Upper lobe of right lung (tissue), 1 donor: ENCODE measurements at regions of chr17 and their contacts with region 1.

Region 1: GRCh38 chr17:43994272-43995149 is 9.9 kb upstream of the NAGS start:
- DNase-seq: peak; percentile 84
- ATAC-seq: peak; percentile 85
- H3K4me3 ChIP-seq: no peak overlapping the region
- H3K27ac ChIP-seq: no peak overlapping the region
- H3K4me1 ChIP-seq: peaks cover 6% of the 10 kb centered on the region
- H3K27me3 ChIP-seq: peaks cover 12% of the 10 kb centered on the region
- CTCF ChIP-seq: peak; percentile 82

Region 2: GRCh38 chr17:43940630-43941029 is 53.9 kb before region 1 on chr17:
- intact Hi-C with region 1: loop called (anchors 10 kb)
- DNase-seq: no peak
- ATAC-seq: no peak
- H3K4me3 ChIP-seq: no peak overlapping the region
- H3K27ac ChIP-seq: no peak overlapping the region
- H3K4me1 ChIP-seq: peaks cover 5% of the 10 kb centered on the region
- H3K27me3 ChIP-seq: peaks cover 27% of the 10 kb centered on the region
- CTCF ChIP-seq: no peak

Region 3: GRCh38 chr17:44061446-44061845 is 66.9 kb after region 1 on chr17:
- intact Hi-C with region 1: no loop called
- DNase-seq: no peak
- ATAC-seq: no peak
- H3K4me3 ChIP-seq: no peak overlapping the region
- H3K27ac ChIP-seq: no peak overlapping the region
- H3K4me1 ChIP-seq: peaks cover 8% of the 10 kb centered on the region
- H3K27me3 ChIP-seq: no peaks in the 10 kb centered on the region
- CTCF ChIP-seq: no peak